Activated T-helper 1 cell treated with anti-CD3 and anti-CD28 coated beads, Interleukin-12 subunit alpha, Interleukin-12 subunit beta, Interleukin-2, Interleukin-4 antibody, amounts not matched to agents 30 ng/mL and 10 ng/mL and 1 ng/mL, durations not matched to agents 14 hours and 24 hours and 36 hours (primary cell): ENCODE measurements at regions of chr6 and their contacts with region 1.

Region 1: DNA sequence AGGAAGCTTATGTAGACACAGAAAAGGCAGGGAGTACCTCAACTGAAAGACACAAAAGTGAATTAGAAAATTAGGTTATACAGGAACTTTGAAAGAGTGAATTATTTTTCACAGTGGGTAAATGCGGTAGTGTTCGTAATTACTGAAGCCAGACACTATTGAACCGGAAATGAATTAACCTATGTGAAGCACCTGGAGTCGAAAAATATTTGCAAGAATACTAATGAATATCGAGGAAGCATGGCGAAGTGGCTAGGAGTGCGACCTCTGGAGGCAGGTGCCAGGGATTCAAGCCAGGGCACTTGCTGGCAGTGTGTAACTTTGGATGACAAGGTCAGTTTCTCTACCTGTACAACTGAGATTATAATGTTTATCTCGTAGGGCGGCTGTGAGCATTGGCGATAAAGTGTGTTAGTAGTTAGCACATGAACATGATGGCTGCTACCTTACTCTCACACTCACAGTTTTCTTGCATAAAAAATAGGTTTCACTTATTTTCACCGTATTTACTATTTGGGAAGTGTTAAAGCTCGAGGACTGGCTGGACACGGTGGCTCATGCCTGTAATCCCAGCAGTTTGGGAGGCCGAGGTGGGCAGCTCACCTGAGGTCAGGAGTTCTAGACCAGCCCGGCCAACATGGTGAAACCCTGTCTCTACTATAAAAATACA is 567 bp upstream of the SLC18B1 start:
- DNase-seq: peak; percentile 46
- H3K4me3 Mint-ChIP-seq: no peak overlapping the region
- H3K27ac Mint-ChIP-seq: peak overlapping the region; percentile 80
- H3K4me1 Mint-ChIP-seq: peaks cover 10% of the 10 kb centered on the region
- H3K27me3 Mint-ChIP-seq: peaks cover 8% of the 10 kb centered on the region

Region 2: GRCh38 chr6:132669690-132670291 is 129.2 kb before region 1 on chr6:
- intact Hi-C with region 1: loop called (anchors 1 kb)
- DNase-seq: no peak
- H3K4me3 Mint-ChIP-seq: no peak overlapping the region
- H3K27ac Mint-ChIP-seq: no peak overlapping the region
- H3K4me1 Mint-ChIP-seq: peaks cover 7% of the 10 kb centered on the region
- H3K27me3 Mint-ChIP-seq: peaks cover 5% of the 10 kb centered on the region

Region 3: DNA sequence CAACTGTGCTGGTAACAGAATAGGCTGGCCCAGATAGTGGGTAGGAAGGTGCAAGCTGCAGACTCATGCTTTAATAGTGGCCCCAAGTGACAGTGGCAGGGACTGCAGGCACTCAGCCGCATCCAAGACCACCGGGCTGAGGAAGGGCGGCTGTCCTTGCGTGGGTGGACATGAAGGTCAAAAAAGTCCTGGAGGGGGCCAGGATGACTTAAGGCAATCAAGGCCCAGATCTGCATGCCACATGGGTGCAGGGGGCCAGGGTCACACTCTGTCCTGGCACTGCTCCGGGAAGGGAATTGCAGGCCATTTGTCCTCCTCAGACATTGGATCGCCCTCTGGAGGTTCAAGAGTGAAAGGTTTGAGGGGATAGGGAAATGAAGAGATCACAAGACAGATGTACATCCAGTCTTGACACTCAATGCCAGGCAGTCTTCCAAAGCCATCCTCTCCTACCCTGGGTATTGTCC is 30.9 kb before region 1 on chr6:
- intact Hi-C with region 1: loop called (anchors 1 kb)
- DNase-seq: no peak
- H3K4me3 Mint-ChIP-seq: no peak overlapping the region
- H3K27ac Mint-ChIP-seq: no peak overlapping the region
- H3K4me1 Mint-ChIP-seq: peaks cover 16% of the 10 kb centered on the region
- H3K27me3 Mint-ChIP-seq: no peaks in the 10 kb centered on the region

Region 4: DNA sequence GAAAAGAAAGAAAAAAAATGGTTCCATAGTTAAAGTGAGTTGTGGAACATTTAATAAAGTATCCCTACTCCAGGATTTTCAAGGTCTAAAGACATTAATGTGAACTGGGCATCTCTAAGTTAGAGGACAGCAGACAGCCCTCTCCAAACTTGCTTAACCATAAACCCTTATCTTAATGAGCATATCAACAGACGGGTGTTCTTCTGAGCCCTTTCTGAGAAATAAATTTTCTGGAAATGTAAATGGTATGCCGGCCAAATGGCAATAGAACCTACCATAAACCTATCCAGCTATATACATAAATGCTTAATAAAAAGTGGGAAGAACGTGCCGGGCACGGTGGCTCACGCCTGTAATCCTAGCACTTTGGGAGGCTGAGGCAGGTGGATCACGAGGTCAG is 13.1 kb before region 1 on chr6:
- intact Hi-C with region 1: loop called (anchors 2 kb)
- DNase-seq: no peak
- H3K4me3 Mint-ChIP-seq: no peak overlapping the region
- H3K27ac Mint-ChIP-seq: no peak overlapping the region
- H3K4me1 Mint-ChIP-seq: peaks cover 4% of the 10 kb centered on the region
- H3K27me3 Mint-ChIP-seq: no peaks in the 10 kb centered on the region

Region 5: GRCh38 chr6:132872923-132873322 is 73.9 kb after region 1 on chr6:
- intact Hi-C with region 1: no loop called
- DNase-seq: no peak
- H3K4me3 Mint-ChIP-seq: no peak overlapping the region
- H3K27ac Mint-ChIP-seq: no peak overlapping the region
- H3K4me1 Mint-ChIP-seq: no peaks in the 10 kb centered on the region
- H3K27me3 Mint-ChIP-seq: peaks cover 11% of the 10 kb centered on the region